ENCODE measurements at regions of chr14 and their contacts with region 1.

Region 1: GRCh38 chr14:60553808-60554207 is 44.9 kb downstream of the SIX6 start:
- H3K4me3 Mint-ChIP-seq: no peak overlapping the region
- H3K27ac Mint-ChIP-seq: no peak overlapping the region
- H3K4me1 Mint-ChIP-seq: no peaks in the 10 kb centered on the region
- H3K27me3 Mint-ChIP-seq: no peaks in the 10 kb centered on the region

Region 2: GRCh38 chr14:60363275-60363674 is 190.5 kb before region 1 on chr14:
- intact Hi-C with region 1: loop called (anchors 10 kb)
- H3K4me3 Mint-ChIP-seq: no peak overlapping the region
- H3K27ac Mint-ChIP-seq: no peak overlapping the region
- H3K4me1 Mint-ChIP-seq: no peaks in the 10 kb centered on the region
- H3K27me3 Mint-ChIP-seq: peaks cover 2% of the 10 kb centered on the region

Measured in dendritic cell treated with granulocyte-macrophage colony-stimulating factor and Interleukin-4, amounts not matched to agents 40 ng/mL and 50 ng/mL, for 4 days (primary cell).